Activated naive CD4-positive, alpha-beta T cell treated with anti-CD3 and anti-CD28 coated beads, Interleukin-2, amount 10 ng/mL, durations not matched to agents 7 days and 5 days (primary cell): ENCODE measurements at regions of chr4 and their contacts with region 1.

Region 1: DNA sequence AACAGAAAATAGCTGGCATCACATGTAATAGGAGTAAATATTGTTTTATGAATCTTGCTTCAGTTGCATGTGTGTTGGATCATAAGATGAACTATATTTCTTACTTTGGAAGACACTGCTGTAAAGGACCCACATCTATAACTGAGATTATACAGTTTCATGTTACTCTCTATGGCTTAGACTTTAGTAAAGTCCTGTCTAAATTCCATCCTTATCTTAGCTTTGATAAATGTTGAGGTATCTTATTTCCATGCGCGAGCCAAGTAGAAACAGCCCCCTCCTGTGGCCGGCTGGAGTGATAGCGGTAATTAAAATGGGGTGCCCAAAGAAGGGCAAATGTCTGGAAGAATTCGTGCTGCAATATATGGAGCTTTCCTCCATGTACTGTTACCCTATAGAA is 43.0 kb downstream of the CCDC158 start:
- DNase-seq: peak; percentile 66
- H3K4me3 Mint-ChIP-seq: no peak overlapping the region
- H3K27ac Mint-ChIP-seq: no peak overlapping the region
- H3K4me1 Mint-ChIP-seq: no peaks in the 10 kb centered on the region
- H3K27me3 Mint-ChIP-seq: peaks cover 14% of the 10 kb centered on the region

Region 2: GRCh38 chr4:76251441-76252270 is 126.3 kb before region 1 on chr4 and contains the start of gene FAM47E:
- CTCF ChIA-PET with region 1: interaction called, 49 read pairs
- DNase-seq: peak; percentile 55
- H3K4me3 Mint-ChIP-seq: peak within 1 kb of the TSS; percentile 68
- H3K27ac Mint-ChIP-seq: no peak within 1 kb of the TSS
- H3K4me1 Mint-ChIP-seq: peaks cover 10% of the 10 kb centered on the region
- H3K27me3 Mint-ChIP-seq: peaks cover 61% of the 10 kb centered on the region

Region 3: DNA sequence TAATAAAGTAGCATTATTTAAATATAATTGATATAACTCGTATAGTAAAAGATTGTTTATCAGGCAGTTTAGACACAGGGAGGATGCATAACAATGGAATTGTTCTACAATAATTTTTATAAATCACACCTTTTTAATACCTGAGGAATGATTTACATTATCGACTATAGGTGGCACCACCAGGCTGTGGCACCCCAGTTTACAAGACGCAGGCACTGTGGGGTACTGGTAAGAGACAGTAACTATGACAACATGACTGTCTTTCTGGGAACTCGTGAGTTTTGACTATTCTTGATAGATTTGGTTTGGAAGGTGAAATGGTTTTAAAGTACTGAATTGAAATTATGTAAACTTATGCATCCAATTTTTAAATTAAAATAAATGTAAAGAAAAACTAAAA is 98.4 kb before region 1 on chr4:
- CTCF ChIA-PET with region 1: interaction called, 50 read pairs
- DNase-seq: peak; percentile 32
- H3K4me3 Mint-ChIP-seq: no peak overlapping the region
- H3K27ac Mint-ChIP-seq: no peak overlapping the region
- H3K4me1 Mint-ChIP-seq: no peaks in the 10 kb centered on the region
- H3K27me3 Mint-ChIP-seq: peaks cover 29% of the 10 kb centered on the region

Region 4: GRCh38 chr4:76305971-76306881 is 71.7 kb before region 1 on chr4 and contains the start of gene STBD1:
- CTCF ChIA-PET with region 1: interaction called, 32 read pairs
- DNase-seq: peak; percentile 59
- H3K4me3 Mint-ChIP-seq: peak within 1 kb of the TSS; percentile 74
- H3K27ac Mint-ChIP-seq: peak within 1 kb of the TSS; percentile 78
- H3K4me1 Mint-ChIP-seq: peaks cover 48% of the 10 kb centered on the region
- H3K27me3 Mint-ChIP-seq: peaks cover 38% of the 10 kb centered on the region

Region 5: DNA sequence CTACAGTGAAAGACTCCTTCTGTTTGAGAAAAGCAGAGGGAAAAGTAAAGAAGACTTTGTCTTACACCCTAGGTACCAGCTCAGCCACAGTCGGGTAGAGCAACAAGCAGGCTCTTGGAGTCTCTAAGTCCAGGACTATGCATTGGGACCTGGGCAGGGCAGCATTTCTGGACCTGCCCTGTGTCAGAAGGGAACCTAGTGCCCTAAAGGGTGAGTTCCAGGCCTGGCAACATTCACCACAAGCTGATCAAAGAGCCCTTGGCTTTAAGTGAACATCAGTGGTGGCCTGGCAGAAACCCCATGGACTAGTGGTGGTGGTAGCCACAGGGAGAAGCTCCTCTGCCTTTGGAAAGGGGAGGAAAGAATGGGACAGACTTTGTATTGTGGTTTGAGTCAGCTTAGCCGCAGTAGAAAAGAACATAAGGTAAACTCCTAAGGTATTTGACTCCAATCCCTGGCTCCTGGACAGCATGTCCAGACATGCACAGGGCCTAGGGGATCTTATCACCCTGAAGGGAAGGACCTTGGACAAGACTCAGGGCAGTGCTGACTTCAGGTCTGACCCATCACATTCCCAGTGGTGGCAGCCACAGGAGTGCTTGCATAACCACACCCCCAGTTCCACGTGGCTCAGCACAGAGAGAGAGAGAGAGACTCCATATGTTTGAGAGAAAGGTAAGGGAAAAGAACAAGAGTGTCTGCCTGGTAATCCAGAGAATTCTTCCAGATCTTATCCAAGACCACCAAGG is 10.4 kb after region 1 on chr4:
- CTCF ChIA-PET with region 1: interaction called, 10 read pairs
- DNase-seq: no peak
- H3K4me3 Mint-ChIP-seq: no peak overlapping the region
- H3K27ac Mint-ChIP-seq: no peak overlapping the region
- H3K4me1 Mint-ChIP-seq: no peaks in the 10 kb centered on the region
- H3K27me3 Mint-ChIP-seq: peaks cover 10% of the 10 kb centered on the region

Region 6: DNA sequence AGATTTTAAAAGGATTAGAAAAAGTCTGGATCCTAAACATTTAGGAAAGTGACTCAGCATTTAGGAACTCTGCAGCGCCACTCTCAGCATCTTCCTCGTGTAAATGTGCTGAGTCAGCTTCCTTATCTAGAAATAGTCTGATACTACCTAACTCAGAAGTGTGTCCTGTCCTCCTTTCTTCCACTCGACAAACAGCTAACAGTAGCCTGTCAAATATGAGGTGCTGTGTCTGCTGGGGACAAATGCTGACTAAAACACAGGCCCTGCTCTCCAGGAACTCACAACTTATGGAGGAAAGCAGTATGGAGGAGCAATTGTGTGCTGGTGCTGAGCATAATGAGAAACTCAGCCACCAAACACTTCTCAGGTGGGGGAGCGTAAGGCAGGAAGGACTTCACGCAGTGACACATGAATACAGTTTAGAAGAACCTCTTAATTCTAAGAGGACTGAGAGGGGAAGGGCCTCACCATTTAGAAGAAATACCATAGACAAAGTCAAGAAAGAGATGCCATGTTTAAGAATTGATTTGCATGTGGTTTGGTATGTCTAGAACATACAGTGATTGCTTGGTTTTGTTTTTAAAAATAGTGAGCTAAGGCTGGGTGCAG is 394.7 kb after region 1 on chr4:
- CTCF ChIA-PET with region 1: no interaction called
- DNase-seq: no peak
- H3K4me3 Mint-ChIP-seq: no peak overlapping the region
- H3K27ac Mint-ChIP-seq: no peak overlapping the region
- H3K4me1 Mint-ChIP-seq: no peaks in the 10 kb centered on the region
- H3K27me3 Mint-ChIP-seq: peaks cover 7% of the 10 kb centered on the region